ENCODE measurements at regions of chr3 and their contacts with region 1.

Region 1: DNA sequence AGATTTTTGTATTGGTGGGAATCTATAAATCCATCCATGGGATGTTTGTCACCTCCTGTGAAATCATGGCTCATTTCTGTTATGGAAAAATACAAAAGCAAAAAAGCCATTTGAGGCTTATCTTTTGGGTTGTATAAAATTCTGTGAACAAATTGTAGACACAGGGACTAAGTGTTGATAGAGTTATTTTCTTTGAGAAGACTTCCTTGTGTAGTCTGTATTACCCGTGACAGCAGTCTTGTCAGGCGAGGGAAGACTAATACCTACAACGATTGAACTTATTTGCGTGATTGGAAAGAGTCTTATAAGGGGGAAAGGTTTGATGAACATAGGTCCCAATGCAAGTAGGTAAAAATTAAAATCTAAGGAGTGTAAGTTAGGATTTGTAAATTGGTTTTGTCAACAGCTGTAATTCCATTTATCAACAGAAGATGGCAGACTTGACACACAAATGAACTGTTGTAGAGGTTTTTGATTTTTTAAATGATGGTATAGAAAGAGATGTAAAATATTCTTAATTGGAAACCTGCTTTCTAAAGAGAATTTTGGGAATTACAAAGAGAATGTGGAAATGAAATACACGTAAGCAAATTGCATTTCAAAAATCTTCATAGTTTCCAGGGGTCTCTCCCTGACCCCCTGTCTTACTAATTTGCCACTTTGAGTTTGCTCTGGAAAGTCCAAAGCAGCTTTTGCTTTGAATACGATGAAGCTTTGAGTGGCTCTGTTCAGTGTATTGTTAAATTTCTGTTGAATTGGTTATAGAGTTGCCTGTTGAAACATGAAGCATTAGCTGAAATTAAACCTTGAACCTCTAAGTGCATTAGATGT is 33.2 kb downstream of the SLC25A26 start:
- DNase-seq: peak in 1 of 2 donors; percentile 68
- H3K4me3 ChIP-seq: no peak overlapping the region
- H3K27ac ChIP-seq: peak overlapping the region in 1 of 5 donors; percentile 21
- H3K4me1 ChIP-seq: peaks cover 0 to 16% (median 4%) of the 10 kb centered on the region in 4 donors
- H3K27me3 ChIP-seq: no peaks in the 10 kb centered on the region
- CTCF ChIP-seq: peak in 5 of 7 experiments; percentile 56 to 90 (median 80)
- EP300 ChIP-seq: no peak
- POLR2A ChIP-seq: no peak

Region 2: GRCh38 chr3:66789580-66790237 is 535.7 kb after region 1 on chr3:
- intact Hi-C with region 1: no loop called
- DNase-seq: peak in 1 of 2 donors; percentile 25
- H3K4me3 ChIP-seq: no peak overlapping the region
- H3K27ac ChIP-seq: no peak overlapping the region
- H3K4me1 ChIP-seq: no peaks in the 10 kb centered on the region
- H3K27me3 ChIP-seq: no peaks in the 10 kb centered on the region
- CTCF ChIP-seq: no peak
- EP300 ChIP-seq: no peak
- POLR2A ChIP-seq: no peak

Region 3: DNA sequence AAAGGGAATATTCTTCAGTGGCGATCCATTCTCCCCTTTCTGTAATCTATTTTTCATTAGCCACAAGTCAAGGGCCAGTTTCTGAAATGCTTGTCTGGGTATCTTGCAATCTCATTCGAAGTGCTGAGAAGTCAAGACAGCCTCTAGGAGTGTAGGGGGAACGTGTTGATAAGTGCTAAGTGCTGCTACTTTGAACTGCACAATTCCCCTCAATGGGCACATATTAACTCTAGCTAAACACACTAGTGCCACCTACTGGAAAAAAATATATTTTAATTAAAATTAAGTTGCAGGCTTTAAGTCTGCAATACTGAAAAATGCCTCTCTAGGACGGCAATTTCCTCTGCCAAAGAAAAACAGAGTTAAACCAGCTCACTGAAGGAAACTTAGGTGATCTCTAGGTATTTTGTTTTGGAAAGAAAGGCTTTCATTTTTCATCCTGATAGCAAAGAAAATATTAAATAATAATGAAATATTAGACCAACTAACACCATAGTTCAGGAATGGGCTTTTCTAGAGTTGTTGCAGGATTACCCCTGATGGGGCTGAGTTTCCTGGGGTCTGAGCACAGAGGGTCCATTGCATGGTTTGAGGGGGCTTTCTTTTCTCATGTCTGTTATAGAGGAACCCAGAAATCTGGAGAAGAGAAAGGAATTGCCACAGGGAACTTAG is 562.2 kb after region 1 on chr3:
- intact Hi-C with region 1: loop called (anchors 10 kb)
- DNase-seq: peak in 1 of 2 donors; percentile 78
- H3K4me3 ChIP-seq: no peak overlapping the region
- H3K27ac ChIP-seq: no peak overlapping the region
- H3K4me1 ChIP-seq: peaks cover 0 to 47% (median 20%) of the 10 kb centered on the region in 4 donors
- H3K27me3 ChIP-seq: no peaks in the 10 kb centered on the region
- CTCF ChIP-seq: peak in 5 of 7 experiments; percentile 12 to 62 (median 58)
- EP300 ChIP-seq: no peak
- POLR2A ChIP-seq: no peak

Region 4: DNA sequence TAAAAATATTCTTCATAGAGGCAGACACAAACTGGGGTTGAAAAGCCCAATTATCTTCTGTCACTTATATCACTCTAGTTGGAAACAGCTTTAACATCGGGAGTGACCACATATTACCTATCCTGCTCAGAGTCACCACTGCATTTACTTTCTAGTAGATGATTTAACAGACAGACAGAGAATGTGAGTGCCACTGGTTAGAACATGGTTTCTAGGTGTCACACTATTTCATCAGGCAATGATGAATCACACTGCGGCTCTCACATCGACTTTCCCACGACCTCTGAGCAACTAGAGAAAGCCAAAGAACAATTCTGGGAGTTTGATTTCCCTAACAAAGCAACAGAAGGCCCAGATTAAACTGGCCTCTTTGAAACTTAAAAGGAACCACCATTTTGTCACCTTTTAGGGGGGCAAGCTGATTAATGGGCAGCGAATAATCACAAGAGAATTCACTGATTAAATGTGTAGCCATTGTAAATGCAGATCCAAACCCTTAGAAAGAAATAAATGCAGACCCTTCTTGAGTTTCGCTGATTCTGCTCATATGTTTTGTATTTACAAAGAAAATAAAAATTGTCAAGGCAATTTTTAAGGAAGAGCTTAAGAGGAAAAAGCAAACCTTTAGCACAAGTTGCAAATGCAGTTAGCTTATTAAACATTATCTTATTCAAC is 631.5 kb after region 1 on chr3:
- intact Hi-C with region 1: no loop called
- DNase-seq: peak in 1 of 2 donors; percentile 42
- H3K4me3 ChIP-seq: no peak overlapping the region
- H3K27ac ChIP-seq: no peak overlapping the region
- H3K4me1 ChIP-seq: no peaks in the 10 kb centered on the region
- H3K27me3 ChIP-seq: no peaks in the 10 kb centered on the region
- CTCF ChIP-seq: no peak
- EP300 ChIP-seq: no peak
- POLR2A ChIP-seq: no peak